ENCODE measurements at regions of chr6 and their contacts with region 1.

Region 1: DNA sequence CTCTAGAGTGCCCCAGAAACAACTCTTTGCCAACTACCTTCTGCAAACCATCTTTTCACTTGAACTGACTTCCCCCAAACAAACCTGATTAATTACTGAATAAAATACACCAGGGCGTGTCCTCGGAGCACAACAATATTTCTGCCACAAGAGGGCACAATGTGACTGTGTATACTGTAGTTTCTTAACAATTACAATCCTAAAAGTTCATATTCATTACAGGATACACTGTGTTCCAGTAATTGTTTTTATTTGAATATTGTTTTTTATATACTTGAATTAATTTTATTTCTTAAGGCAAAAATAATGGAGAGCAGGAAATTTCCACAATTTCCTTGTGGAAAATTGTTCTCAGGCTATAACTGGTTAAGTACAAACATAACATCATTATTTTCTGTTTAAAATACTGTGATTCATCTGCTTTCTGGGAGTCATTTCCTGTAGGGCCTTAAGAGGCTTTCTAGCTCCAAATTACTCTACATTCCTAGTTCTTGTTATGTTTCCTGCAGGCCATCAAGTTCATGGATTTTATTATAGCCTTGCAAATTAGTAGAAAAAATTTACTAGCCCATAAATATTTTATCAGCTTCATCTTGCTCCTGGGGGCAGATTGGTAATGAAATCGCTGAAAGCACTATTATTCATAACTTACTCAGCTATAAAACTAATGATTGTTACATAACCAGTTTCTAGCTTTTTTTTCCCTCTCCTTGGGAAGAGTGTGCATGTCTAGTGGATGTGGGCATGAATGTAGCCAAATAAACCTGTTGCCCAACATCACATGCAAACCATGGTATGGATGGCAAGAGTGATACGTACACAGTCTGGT is 51.9 kb upstream of the SLC22A16 start:
- DNase-seq: peak; percentile 76
- H3K4me3 Mint-ChIP-seq: no peak overlapping the region
- H3K27ac Mint-ChIP-seq: peak overlapping the region; percentile 66
- H3K4me1 Mint-ChIP-seq: peaks cover 21% of the 10 kb centered on the region
- H3K27me3 Mint-ChIP-seq: no peaks in the 10 kb centered on the region
- CTCF ChIP-seq: peak; percentile 76

Region 2: GRCh38 chr6:110285306-110286060 is 242.8 kb before region 1 on chr6:
- CTCF ChIA-PET with region 1: no interaction called
- POLR2A ChIA-PET with region 1: no interaction called
- intact Hi-C with region 1: no loop called
- DNase-seq: no peak
- H3K4me3 Mint-ChIP-seq: no peak overlapping the region
- H3K27ac Mint-ChIP-seq: no peak overlapping the region
- H3K4me1 Mint-ChIP-seq: no peaks in the 10 kb centered on the region
- H3K27me3 Mint-ChIP-seq: peaks cover 80% of the 10 kb centered on the region
- CTCF ChIP-seq: no peak

Region 3: DNA sequence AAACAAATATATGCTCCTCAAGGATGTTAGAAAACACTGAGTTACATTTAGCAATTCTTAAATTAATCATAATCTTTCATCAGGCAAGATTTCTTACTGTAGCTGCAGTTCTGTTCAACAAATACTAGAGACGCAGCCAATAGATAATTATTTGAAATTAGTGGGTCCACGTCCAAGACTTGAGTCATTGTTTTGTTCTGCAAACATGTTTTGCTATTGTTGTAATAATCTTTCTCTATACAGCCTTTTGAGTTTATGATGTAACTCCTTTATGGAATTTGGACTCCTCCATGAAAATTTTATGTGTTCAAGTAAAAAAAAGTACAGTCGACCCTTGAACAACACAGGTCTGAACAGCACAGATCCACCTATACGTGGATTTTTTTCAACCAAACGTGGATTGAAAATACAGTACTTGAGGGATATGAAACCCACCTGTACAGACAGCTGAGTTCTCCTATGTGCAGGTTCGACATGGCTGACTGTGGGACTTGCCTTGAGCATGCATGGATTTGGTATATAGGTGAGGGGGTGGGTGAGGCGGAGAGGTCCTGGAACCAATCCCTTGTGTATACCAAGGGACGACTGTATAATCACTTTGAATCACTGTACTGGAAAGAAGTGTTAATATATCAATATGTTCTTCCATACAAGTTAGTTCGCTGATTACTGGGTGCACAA is 10.6 kb before region 1 on chr6:
- CTCF ChIA-PET with region 1: interaction called, 26 read pairs
- POLR2A ChIA-PET with region 1: no interaction called
- intact Hi-C with region 1: no loop called
- DNase-seq: peak; percentile 40
- H3K4me3 Mint-ChIP-seq: no peak overlapping the region
- H3K27ac Mint-ChIP-seq: no peak overlapping the region
- H3K4me1 Mint-ChIP-seq: peaks cover 17% of the 10 kb centered on the region
- H3K27me3 Mint-ChIP-seq: no peaks in the 10 kb centered on the region
- CTCF ChIP-seq: no peak

Region 4: DNA sequence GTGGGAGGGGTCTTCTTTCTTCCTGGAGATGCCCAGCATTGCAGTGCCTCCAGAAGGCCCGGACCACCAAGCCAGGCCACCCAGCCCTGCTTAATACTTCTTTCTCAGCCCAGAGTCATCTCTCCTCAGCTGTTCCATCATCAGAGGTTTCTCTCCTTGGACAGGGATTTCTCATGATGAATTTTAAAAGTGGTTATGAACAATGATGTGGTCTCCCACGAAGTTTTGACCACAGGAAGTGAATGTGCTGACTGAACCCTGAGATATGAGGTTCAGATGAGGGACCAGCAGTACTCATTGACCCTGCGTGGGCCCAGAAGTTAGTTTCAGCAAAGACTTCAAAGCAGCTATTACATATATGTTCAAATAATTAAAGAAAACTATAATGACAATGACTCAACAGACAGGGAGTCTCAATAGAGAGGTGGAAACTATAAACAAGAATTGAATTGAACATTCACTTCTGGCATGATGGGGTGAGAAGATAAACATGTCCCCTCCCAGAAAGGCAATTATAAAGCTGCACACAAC is 62.6 kb after region 1 on chr6:
- CTCF ChIA-PET with region 1: no interaction called
- POLR2A ChIA-PET with region 1: no interaction called
- intact Hi-C with region 1: no loop called
- DNase-seq: no peak
- H3K4me3 Mint-ChIP-seq: no peak overlapping the region
- H3K27ac Mint-ChIP-seq: no peak overlapping the region
- H3K4me1 Mint-ChIP-seq: no peaks in the 10 kb centered on the region
- H3K27me3 Mint-ChIP-seq: no peaks in the 10 kb centered on the region
- CTCF ChIP-seq: no peak

Region 5: DNA sequence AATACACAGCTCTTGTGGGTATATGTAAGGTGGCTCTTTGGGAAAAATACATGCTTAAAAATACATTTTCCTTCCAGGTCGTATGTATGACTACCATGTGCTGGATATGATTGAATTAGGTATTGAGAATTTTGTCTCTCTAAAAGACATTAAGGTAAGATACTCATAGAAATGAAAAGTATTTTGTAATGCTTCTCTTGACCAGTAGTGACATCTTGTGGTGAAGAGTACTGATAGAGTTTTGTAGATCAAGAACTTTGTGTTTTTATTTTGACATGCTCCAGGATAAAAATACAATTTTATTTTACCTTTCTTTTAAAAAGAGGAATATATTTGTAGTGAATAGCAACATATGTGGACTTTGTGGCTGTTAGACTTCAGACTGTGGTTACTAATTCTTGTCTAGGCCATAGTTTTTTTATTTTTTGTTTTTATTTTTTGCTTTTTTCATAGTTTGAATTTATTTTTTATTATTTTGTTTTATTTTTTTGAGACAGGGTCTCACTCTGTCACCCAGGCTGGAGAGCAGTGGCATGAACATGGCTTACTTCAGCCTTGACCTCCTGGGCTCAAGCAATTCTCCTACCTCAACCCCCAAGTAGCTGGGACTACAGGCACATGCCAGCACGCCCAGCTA is 471.4 kb after region 1 on chr6:
- CTCF ChIA-PET with region 1: interaction called, 6 read pairs
- POLR2A ChIA-PET with region 1: no interaction called
- intact Hi-C with region 1: loop called (anchors 1 kb)
- DNase-seq: peak; percentile 35
- H3K4me3 Mint-ChIP-seq: no peak overlapping the region
- H3K27ac Mint-ChIP-seq: no peak overlapping the region
- H3K4me1 Mint-ChIP-seq: no peaks in the 10 kb centered on the region
- H3K27me3 Mint-ChIP-seq: no peaks in the 10 kb centered on the region
- CTCF ChIP-seq: peak; percentile 49